Heart right ventricle (tissue), 16 donors: ENCODE measurements at regions of chr19 and their contacts with region 1.

Region 1: DNA sequence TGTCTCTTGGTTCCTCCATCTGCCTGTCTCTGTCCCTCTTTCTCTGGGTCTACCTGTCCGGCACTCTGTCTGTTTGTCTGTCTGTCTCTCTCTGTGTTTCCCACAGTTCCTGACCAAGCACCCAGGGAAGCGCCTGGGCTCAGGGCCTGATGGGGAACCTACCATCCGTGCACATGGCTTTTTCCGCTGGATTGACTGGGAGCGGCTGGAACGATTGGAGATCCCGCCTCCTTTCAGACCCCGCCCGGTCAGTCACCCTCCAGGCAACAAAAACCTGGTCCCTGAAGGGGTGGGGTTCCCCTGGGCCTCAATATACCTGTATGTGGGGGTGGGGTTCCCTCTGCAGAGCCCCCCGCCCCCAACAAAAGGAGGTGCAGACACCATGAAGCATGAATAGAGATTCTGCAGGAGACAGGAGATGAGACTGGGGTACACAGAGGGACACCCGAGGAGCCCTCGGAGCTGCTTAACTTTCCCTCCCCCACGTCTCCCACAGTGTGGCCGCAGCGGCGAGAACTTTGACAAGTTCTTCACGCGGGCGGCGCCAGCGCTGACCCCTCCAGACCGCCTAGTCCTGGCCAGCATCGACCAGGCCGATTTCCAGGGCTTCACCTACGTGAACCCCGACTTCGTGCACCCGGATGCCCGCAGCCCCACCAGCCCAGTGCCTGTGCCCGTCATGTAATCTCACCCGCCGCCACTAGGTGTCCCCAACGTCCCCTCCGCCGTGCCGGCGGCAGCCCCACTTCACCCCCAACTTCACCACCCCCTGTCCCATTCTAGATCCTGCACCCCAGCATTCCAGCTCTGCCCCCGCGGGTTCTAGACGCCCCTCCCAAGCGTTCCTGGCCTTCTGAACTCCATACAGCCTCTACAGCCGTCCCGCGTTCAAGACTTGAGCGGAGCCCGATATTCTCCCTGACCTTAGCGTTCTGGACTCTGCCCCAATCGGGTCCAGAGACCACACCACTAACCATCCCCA is 2.6 kb upstream of the CACNG7 start:
- DNase-seq: peak; percentile 18 to 59
- ATAC-seq: peak in 7 of 8 donors; percentile 44 to 65 (median 58)
- H3K4me3 ChIP-seq: no peak overlapping the region
- H3K27ac ChIP-seq: no peak overlapping the region
- H3K4me1 ChIP-seq: peaks cover 0 to 26% (median 19%) of the 10 kb centered on the region in 9 donors
- H3K27me3 ChIP-seq: peaks cover 19 to 92% (median 69%) of the 10 kb centered on the region in 7 donors
- CTCF ChIP-seq: peak; percentile 51 to 93 (median 81)

Region 2: DNA sequence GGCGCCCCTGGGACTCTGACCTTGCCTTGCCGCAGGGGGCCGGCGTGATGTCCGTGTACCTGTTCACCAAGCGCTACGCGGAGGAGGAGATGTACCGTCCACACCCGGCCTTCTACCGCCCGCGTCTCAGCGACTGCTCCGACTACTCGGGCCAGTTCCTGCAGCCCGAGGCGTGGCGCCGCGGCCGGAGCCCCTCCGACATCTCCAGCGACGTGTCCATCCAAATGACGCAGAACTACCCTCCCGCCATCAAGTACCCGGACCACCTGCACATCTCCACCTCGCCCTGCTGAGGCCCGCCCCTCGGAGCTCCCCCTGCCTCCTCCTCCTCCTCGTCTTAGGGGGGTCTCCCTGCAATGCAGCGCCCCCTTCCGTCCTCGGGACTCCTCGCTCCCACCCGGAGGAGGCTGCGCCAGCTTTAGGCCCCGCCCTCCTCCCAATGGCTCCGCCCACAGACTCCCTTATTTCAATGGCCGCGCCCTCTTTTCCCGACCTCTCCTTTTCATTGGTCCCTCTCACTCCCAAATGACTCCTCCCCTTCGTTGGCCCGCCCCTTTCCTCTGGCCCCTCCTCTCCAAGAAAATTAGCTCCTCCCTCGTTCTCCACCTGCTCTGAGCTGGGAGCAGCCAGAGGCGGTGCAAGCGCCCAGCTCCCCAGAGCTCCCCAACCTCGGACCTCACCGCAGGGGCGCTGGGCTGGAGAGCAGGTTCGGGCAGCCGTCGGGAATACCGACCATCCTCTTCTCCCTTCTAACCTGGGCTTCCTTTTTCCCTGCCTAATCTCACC is 35.7 kb after region 1 on chr19:
- intact Hi-C with region 1: loop called in 1 of 10 experiments (anchors 2 kb)
- DNase-seq: no peak
- ATAC-seq: no peak
- H3K4me3 ChIP-seq: no peak overlapping the region
- H3K27ac ChIP-seq: no peak overlapping the region
- H3K4me1 ChIP-seq: no peaks in the 10 kb centered on the region
- H3K27me3 ChIP-seq: peaks cover 8 to 90% (median 72%) of the 10 kb centered on the region in 7 donors
- CTCF ChIP-seq: no peak

Region 3: GRCh38 chr19:54023191-54023590 is 116.7 kb after region 1 on chr19:
- intact Hi-C with region 1: loop called (anchors 2 to 5 kb)
- DNase-seq: no peak
- ATAC-seq: no peak
- H3K4me3 ChIP-seq: no peak overlapping the region
- H3K27ac ChIP-seq: peak overlapping the region in 1 of 10 donors; percentile 55
- H3K4me1 ChIP-seq: peaks cover 0 to 34% (median 0%) of the 10 kb centered on the region in 9 donors
- H3K27me3 ChIP-seq: peaks cover 0 to 51% (median 28%) of the 10 kb centered on the region in 7 donors
- CTCF ChIP-seq: no peak